ENCODE measurements at regions of chr7 and their contacts with region 1.

Region 1: GRCh38 chr7:27196287-27196767 is 3.6 kb downstream of the HOXA13 start:
- DNase-seq: peak; percentile 82 to 83
- ATAC-seq: peak in 4 of 8 donors; percentile 54 to 66 (median 58)
- H3K4me3 ChIP-seq: no peak overlapping the region
- H3K27ac ChIP-seq: no peak overlapping the region
- H3K4me1 ChIP-seq: peaks cover 9 to 47% (median 32%) of the 10 kb centered on the region in 9 donors
- H3K27me3 ChIP-seq: peaks cover 55 to 98% (median 97%) of the 10 kb centered on the region in 7 donors
- CTCF ChIP-seq: peak; percentile 37 to 88 (median 83)

Region 2: GRCh38 chr7:27245798-27246691 is 49.7 kb after region 1 on chr7:
- intact Hi-C with region 1: no loop called
- DNase-seq: no peak
- ATAC-seq: peak in 3 of 8 donors; percentile 24 to 42 (median 39)
- H3K4me3 ChIP-seq: peak overlapping the region in 6 of 10 donors; percentile 2 to 37 (median 22)
- H3K27ac ChIP-seq: no peak overlapping the region
- H3K4me1 ChIP-seq: peaks cover 0 to 42% (median 35%) of the 10 kb centered on the region in 9 donors
- H3K27me3 ChIP-seq: peaks cover 55 to 100% (median 100%) of the 10 kb centered on the region in 7 donors
- CTCF ChIP-seq: no peak

Region 3: DNA sequence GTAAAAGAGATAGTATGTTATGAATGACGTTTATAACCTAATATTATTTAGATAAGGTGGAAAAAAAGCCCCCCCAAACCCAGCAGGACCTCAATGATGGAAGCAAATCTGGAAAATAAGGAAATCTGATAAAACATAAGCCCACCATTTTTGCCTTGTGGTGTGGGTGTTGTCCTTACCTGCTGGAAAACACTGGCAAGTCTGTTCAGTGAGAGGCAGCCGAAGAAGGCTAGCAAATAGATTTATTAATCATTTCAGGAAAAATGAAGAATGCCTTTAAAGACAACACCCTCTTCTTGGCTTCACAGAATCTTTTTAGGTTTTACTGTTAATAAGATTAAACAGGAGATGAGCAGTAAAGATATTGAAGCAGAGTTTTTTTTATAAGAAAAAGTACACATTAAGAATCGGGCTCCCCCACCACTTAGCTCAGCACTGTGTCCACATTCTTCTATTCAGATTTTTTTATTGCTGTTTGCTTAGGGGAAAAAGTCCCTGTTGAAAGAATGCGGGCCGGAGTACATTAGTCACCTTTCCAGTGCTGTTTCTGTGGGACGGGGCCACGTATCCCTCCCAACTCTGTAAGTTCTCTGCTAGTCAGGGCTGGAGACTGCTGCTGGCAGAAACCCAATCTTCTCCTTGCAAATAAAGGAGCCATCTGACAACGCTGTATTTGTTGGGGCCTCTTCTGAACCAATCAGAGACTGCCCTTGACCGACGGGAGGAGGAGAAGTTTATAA is 150.4 kb after region 1 on chr7:
- intact Hi-C with region 1: no loop called
- DNase-seq: peak in 1 of 2 donors; percentile 7
- ATAC-seq: peak in 2 of 8 donors; percentile 11 to 42
- H3K4me3 ChIP-seq: no peak overlapping the region
- H3K27ac ChIP-seq: no peak overlapping the region
- H3K4me1 ChIP-seq: no peaks in the 10 kb centered on the region
- H3K27me3 ChIP-seq: peaks cover 0 to 30% (median 11%) of the 10 kb centered on the region in 7 donors
- CTCF ChIP-seq: no peak

Region 4: DNA sequence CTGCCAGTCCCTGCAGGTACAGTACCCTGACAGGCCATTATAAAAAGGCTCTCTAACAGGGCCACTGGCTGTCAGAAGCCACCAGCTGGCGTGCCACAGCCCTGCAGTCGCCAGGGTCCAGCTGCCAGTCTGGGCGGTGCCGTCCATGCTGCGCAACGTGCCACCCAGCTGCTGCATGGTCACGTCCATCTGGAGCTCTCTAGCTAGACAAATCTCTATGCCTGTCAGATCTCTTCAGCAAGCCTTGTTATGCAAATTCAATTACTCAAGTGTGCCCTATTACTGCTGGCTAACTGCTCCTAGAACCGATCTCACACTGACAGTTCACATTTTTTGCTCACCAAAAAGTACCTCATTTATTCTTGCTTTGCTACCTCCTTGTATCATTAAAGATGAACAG is 390.5 kb after region 1 on chr7:
- intact Hi-C with region 1: loop called in 1 of 10 experiments (anchors 10 kb)
- DNase-seq: peak in 1 of 2 donors; percentile 14
- ATAC-seq: peak in 1 of 8 donors; percentile 27
- H3K4me3 ChIP-seq: no peak overlapping the region
- H3K27ac ChIP-seq: no peak overlapping the region
- H3K4me1 ChIP-seq: no peaks in the 10 kb centered on the region
- H3K27me3 ChIP-seq: no peaks in the 10 kb centered on the region
- CTCF ChIP-seq: no peak

Region 5: DNA sequence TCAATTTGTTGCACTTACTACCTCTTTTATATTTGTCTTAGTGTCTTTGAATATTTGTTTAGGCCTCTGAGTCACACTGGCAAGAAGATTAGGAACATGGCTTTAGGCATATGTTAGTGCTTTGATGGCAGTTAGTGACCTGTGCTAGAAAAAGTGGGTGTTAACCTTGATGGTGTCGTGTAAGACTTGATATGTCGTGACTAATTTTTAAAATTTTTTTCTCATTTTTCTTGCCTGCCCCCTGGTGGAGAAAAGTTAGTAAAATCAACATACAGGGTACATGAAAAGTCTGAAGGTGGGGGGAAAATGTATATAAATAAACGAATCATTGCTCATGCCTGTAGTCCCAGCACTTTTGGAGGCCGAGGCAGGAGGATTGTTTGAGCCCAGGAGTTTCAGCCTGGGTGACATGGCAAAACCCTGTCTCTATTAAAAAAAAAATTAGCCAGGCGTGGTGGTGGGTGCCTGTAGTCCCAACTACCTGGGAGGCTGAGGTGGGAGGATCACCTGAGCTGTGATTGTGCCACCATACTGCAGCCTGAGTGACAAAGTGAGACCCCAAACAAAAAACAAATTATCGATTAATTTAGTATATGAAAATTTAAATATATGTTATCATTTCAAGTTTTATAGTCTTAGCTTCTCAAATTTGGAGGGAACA is 588.2 kb after region 1 on chr7:
- intact Hi-C with region 1: loop called in 4 of 10 experiments (anchors 10 kb)
- DNase-seq: no peak
- ATAC-seq: no peak
- H3K4me3 ChIP-seq: no peak overlapping the region
- H3K27ac ChIP-seq: no peak overlapping the region
- H3K4me1 ChIP-seq: peaks cover 0 to 25% (median 8%) of the 10 kb centered on the region in 9 donors
- H3K27me3 ChIP-seq: no peaks in the 10 kb centered on the region
- CTCF ChIP-seq: peak in 8 of 9 donors; percentile 21 to 67 (median 54)

Region 6: GRCh38 chr7:28020302-28020940 is 824.1 kb after region 1 on chr7:
- intact Hi-C with region 1: loop called (anchors 1 to 10 kb)
- DNase-seq: peak; percentile 49 to 63
- ATAC-seq: peak; percentile 73 to 90 (median 82)
- H3K4me3 ChIP-seq: no peak overlapping the region
- H3K27ac ChIP-seq: no peak overlapping the region
- H3K4me1 ChIP-seq: peaks cover 3 to 57% (median 21%) of the 10 kb centered on the region in 9 donors
- H3K27me3 ChIP-seq: no peaks in the 10 kb centered on the region
- CTCF ChIP-seq: peak; percentile 74 to 95 (median 87)

Region 7: DNA sequence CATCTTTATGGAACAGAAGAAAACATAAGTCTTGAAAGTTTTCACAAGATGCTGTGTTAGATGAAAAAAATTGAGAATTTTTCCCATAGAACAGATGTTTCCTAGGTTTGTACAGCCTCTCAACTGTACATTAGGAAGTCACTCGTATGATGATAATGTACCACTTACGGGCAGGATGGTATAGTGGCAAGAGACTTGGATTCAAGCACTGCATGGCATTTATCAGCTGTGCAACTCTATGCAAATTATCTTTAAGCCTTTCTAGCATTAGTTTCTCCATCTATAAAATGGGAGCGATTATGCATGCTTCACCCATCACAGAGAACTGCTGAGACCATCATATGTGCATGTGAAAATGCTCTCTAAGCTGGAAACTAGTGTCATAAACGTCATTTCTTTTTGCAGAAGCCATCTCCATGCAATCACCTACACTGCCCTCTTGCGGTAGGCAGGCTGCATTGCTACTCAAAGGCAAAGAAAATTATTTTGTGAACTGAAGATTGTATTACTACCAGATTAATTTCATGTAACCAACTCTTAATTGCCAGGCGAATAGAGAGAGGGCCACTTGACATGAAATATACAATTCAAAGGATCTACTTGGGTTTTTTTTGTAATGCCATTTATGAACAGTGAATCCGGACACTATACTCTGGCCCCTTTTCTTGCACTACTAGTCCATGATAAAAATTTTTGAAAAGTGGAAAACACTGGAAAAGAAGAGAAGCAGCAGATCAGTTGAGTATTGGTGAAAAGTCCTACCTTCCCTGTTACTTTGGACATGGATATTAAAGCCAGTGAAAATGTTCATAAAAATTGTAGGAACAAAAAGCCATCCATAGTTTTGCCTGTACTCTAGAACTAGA is 881.9 kb after region 1 on chr7:
- intact Hi-C with region 1: loop called in 4 of 10 experiments (anchors 5 to 10 kb)
- DNase-seq: peak in 1 of 2 donors; percentile 21
- ATAC-seq: peak in 2 of 8 donors; percentile 48 to 57
- H3K4me3 ChIP-seq: no peak overlapping the region
- H3K27ac ChIP-seq: no peak overlapping the region
- H3K4me1 ChIP-seq: peaks cover 0 to 52% (median 30%) of the 10 kb centered on the region in 9 donors
- H3K27me3 ChIP-seq: no peaks in the 10 kb centered on the region
- CTCF ChIP-seq: peak; percentile 86 to 98 (median 95)

Region 8: GRCh38 chr7:28096713-28097112 is 900.4 kb after region 1 on chr7:
- intact Hi-C with region 1: loop called in 6 of 10 experiments (anchors 5 to 10 kb)
- DNase-seq: peak in 1 of 2 donors; percentile 63
- ATAC-seq: peak in 7 of 8 donors; percentile 64 to 78 (median 74)
- H3K4me3 ChIP-seq: no peak overlapping the region
- H3K27ac ChIP-seq: peak overlapping the region in 2 of 10 donors; percentile 41 to 50
- H3K4me1 ChIP-seq: peaks cover 0 to 38% (median 10%) of the 10 kb centered on the region in 9 donors
- H3K27me3 ChIP-seq: no peaks in the 10 kb centered on the region
- CTCF ChIP-seq: peak; percentile 73 to 91 (median 84)